BJ (cell line): ENCODE measurements at regions of chr5 and their contacts with region 1.

Region 1: DNA sequence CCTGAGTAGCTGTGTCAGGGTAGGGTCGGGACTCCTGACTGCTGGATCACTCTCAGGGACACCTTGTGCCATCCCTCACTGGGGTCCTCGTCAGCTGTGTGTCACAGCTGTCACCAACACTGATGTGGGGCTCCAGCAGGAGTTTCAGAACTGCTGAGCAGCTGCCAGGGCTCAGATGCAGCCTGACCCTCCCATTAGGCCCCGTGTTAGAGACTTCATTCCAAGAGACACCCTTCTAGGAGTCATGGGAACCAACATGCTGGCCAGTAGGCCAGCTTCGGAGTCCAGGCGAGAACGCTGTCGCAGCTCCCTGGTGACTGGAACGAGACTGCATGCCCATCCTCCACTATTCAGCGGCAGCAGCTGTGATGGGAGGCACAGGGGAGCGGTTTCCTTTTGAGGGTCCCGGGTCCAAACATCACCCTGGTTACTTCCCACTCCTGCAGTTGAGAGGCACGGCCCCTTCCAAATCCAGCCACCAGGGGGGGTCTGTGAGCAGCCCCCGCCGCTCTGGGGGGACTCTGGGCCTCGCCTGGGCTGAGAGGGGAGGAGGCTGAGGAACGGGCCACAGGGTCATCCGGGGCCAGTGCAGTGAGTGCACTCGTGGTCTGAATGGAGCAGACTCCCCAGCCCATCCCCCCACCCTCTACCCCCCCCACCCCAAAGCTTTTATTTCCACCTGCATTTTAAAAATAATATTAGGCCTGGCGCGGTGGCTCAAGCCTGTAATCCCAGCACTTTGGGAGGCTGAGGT is 12.6 kb upstream of the TCF7 start:
- DNase-seq: no peak
- H3K4me3 ChIP-seq: no peak overlapping the region
- H3K27me3 ChIP-seq: peaks cover 3% of the 10 kb centered on the region; the same call in 1 of the 2 replicates
- CTCF ChIP-seq: peak; percentile 95

Region 2: DNA sequence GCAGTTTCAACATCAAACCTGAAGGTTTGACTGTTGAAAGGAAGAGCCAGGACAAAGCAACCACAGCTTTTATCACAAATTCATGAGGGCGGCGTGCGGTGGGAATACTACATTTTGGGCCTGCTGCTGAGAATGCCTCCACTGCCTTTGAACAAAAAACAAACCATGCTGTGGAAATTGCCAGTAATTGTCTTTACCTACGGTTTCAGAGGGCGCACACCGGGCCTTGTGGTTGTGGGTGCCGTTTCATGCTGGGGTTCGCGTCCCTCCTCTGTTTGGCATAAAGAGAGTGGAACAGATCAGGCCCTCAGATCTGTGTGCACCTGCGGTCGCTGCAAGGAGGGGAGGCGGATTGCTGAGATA is 14.9 kb before region 1 on chr5:
- CTCF ChIA-PET with region 1: interaction called, 25 read pairs
- POLR2A ChIA-PET with region 1: no interaction called
- DNase-seq: no peak
- H3K4me3 ChIP-seq: no peak overlapping the region
- H3K27me3 ChIP-seq: peaks cover 4% of the 10 kb centered on the region
- CTCF ChIP-seq: no peak

Region 3: DNA sequence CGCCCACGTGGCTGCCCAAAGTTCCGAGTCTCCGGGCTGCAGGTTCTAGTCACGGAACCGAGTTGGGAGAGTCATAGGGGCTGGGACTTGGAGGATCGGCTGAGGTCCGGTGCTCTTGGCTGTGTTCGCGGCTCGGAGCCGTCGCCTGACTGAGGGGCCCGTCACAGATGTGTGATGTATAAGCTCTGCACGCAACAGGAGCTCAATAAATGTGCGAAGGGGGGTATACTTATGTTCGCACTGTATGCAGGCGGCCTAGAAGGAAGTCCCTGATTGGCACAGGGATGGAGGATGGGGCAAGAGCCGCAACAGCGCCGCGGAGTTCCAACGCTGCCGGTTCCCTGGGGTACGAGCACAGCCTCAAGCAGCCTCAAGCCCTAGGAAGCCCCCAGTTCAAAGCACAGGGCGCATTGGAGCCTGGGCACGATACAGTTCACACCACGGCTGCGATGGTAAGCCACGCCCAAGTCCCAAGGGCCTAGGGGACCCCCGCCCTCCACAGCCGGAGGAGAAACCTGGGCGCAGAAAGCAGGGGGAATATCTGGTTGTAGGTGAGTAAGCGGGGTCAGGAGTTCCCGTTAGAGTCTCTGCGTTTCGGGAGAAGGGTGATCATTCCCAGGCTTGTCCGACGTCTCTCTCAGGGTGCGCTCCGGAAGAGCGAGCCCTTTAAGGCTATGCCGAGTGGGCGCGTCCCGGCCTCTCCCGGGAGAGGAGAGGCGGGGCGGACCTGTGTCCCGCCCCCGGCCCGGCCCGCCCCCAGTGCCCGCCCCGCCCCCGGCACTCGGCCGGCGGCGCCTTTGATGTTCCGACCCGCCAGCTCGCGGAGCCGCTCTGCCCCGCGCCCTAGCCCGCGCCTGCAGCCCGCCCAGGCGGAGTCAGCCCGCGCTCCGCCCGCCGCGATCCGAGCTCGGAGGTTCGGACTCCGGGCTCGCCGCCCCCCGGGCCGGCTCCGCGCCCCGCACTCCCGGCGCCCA is 12.3 kb after region 1 on chr5 and contains the start of gene TCF7:
- CTCF ChIA-PET with region 1: interaction called, 51 read pairs
- POLR2A ChIA-PET with region 1: no interaction called
- DNase-seq: no peak
- H3K4me3 ChIP-seq: peak within 1 kb of the TSS; percentile 43
- H3K27me3 ChIP-seq: peaks cover 4% of the 10 kb centered on the region
- CTCF ChIP-seq: no peak
- polyA plus RNA-seq, gene TCF7: 0.78 and 0.86 TPM in 2 replicates

Region 4: DNA sequence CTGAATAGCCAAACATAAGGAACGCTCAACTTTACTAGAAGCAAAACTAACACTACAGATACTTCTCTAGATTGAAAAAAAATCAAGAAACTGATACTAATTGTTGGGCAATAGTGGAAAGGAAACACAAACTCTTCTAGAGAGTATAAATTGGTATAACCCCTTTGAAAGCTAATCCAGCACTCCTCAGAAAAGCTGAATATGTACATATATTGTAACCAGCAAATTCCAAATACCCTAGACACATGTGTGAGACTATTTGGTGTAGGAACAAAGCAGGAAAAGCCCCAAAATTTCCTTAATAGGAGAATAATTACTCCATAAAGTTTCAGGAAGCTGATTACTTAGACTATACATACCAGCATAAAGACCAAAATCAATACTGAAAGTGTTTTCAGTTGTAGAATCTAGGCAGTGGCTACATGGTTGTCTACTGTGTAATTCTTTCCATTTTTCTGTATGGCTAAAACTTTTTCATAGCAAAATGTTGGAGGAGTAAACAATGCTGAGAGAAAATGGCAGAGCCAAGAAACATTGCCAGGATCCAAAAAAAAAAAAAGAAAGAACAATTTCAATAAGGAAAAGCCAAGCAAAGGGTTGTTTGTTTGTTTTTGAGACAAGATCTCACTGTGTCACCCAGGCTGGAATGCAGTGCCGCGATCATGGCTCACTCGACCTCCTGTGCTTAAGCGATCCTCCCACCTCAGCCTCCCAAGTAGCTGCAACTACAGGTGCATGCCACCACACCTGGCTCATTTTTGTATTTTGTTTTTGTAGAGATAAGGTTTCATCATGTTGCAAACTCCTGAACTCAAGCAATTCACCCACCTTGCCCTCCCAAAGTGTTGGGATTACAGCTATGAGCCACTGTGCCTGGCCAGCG is 59.9 kb after region 1 on chr5:
- CTCF ChIA-PET with region 1: no interaction called
- POLR2A ChIA-PET with region 1: no interaction called
- DNase-seq: no peak
- H3K4me3 ChIP-seq: no peak overlapping the region
- H3K27me3 ChIP-seq: no peaks in the 10 kb centered on the region
- CTCF ChIP-seq: no peak